Ascending aorta (tissue), 2 donors: ENCODE measurements at regions of chr15 and their contacts with region 1.

Region 1: GRCh38 chr15:52261498-52262242 is 33.9 kb downstream of the MYO5C start:
- DNase-seq: peak; percentile 67 to 89
- H3K4me3 ChIP-seq: no peak overlapping the region
- H3K27ac ChIP-seq: peak overlapping the region; percentile 65 to 81
- H3K4me1 ChIP-seq: peaks cover 0 to 14% of the 10 kb centered on the region in 2 donors
- H3K27me3 ChIP-seq: no peaks in the 10 kb centered on the region
- CTCF ChIP-seq: peak in 2 of 3 experiments; percentile 27 to 32

Region 2: GRCh38 chr15:52154896-52155865 is 106.5 kb before region 1 on chr15:
- intact Hi-C with region 1: no loop called
- DNase-seq: no peak
- H3K4me3 ChIP-seq: no peak overlapping the region
- H3K27ac ChIP-seq: no peak overlapping the region
- H3K4me1 ChIP-seq: no peaks in the 10 kb centered on the region
- H3K27me3 ChIP-seq: no peaks in the 10 kb centered on the region
- CTCF ChIP-seq: no peak

Region 3: GRCh38 chr15:52234596-52235541 is 26.8 kb before region 1 on chr15:
- intact Hi-C with region 1: no loop called
- DNase-seq: no peak
- H3K4me3 ChIP-seq: no peak overlapping the region
- H3K27ac ChIP-seq: no peak overlapping the region
- H3K4me1 ChIP-seq: no peaks in the 10 kb centered on the region
- H3K27me3 ChIP-seq: no peaks in the 10 kb centered on the region
- CTCF ChIP-seq: no peak

Region 4: GRCh38 chr15:52642386-52643361 is 381.0 kb after region 1 on chr15:
- intact Hi-C with region 1: loop called (anchors 10 kb)
- DNase-seq: no peak
- H3K4me3 ChIP-seq: no peak overlapping the region
- H3K27ac ChIP-seq: peak overlapping the region; percentile 28 to 73
- H3K4me1 ChIP-seq: peaks cover 4 to 8% of the 10 kb centered on the region in 2 donors
- H3K27me3 ChIP-seq: no peaks in the 10 kb centered on the region
- CTCF ChIP-seq: no peak